Activated B cell treated with CpG ODN at 0.5 μM for 24 hours (primary cell): ENCODE measurements at regions of chr15 and their contacts with region 1.

Region 1: GRCh38 chr15:64067564-64068030 is 21.3 kb upstream of the DAPK2 start:
- DNase-seq: peak; percentile 54
- ATAC-seq: peak; percentile 91
- H3K4me3 Mint-ChIP-seq: no peak overlapping the region
- H3K27ac Mint-ChIP-seq: peak overlapping the region; percentile 20
- H3K4me1 Mint-ChIP-seq: peaks cover 27% of the 10 kb centered on the region
- H3K27me3 Mint-ChIP-seq: no peaks in the 10 kb centered on the region
- CTCF ChIP-seq: no peak

Region 2: GRCh38 chr15:63610200-63610841 is 457.3 kb before region 1 on chr15:
- CTCF ChIA-PET with region 1: interaction called, 5 read pairs
- POLR2A ChIA-PET with region 1: no interaction called
- intact Hi-C with region 1: loop called (anchors 2 kb)
- DNase-seq: no peak
- ATAC-seq: peak; percentile 91
- H3K4me3 Mint-ChIP-seq: peak overlapping the region; percentile 21
- H3K27ac Mint-ChIP-seq: peak overlapping the region; percentile 88
- H3K4me1 Mint-ChIP-seq: peaks cover 26% of the 10 kb centered on the region
- H3K27me3 Mint-ChIP-seq: no peaks in the 10 kb centered on the region
- CTCF ChIP-seq: no peak

Region 3: DNA sequence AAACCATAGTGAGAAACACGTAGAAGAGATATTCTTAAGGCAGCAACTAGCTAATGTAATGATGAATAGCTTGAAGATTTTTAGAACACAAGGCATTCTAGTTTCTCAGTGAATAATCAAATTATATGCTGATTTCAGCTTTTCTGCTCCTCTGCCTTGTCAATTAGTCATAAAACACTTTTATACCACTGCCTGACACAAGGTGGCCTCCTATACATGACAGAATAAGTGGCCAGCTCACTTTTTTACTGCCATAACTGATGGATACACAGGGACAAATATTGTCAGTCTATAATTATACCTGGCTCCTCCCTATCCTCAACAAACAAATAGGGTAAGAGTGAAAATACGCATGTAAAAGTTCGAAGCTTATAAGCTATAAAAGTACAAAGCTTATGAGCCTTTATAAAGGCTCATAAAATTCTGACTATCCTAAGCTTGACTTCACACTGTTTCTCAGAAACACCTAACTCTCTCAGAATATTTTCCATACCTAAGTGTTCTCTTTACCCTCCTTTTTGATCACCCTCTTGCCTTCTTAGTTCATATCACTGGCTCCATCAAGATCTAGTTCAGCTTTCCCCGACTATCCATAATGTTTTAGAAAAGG is 315.4 kb before region 1 on chr15:
- CTCF ChIA-PET with region 1: interaction called, 196 read pairs
- POLR2A ChIA-PET with region 1: interaction called, 11 read pairs
- intact Hi-C with region 1: loop called (anchors 1 kb)
- DNase-seq: no peak
- ATAC-seq: peak; percentile 83
- H3K4me3 Mint-ChIP-seq: no peak overlapping the region
- H3K27ac Mint-ChIP-seq: peak overlapping the region; percentile 59
- H3K4me1 Mint-ChIP-seq: peaks cover 3% of the 10 kb centered on the region
- H3K27me3 Mint-ChIP-seq: no peaks in the 10 kb centered on the region
- CTCF ChIP-seq: no peak

Region 4: GRCh38 chr15:63891079-63891767 is 176.4 kb before region 1 on chr15:
- CTCF ChIA-PET with region 1: interaction called, 11 read pairs
- POLR2A ChIA-PET with region 1: interaction called, 3 read pairs
- intact Hi-C with region 1: loop called (anchors 1 kb)
- DNase-seq: peak; percentile 74
- ATAC-seq: peak; percentile 71
- H3K4me3 Mint-ChIP-seq: no peak overlapping the region
- H3K27ac Mint-ChIP-seq: no peak overlapping the region
- H3K4me1 Mint-ChIP-seq: peaks cover 35% of the 10 kb centered on the region
- H3K27me3 Mint-ChIP-seq: no peaks in the 10 kb centered on the region
- CTCF ChIP-seq: peak; percentile 53

Region 5: GRCh38 chr15:63986751-63987341 is 80.8 kb before region 1 on chr15:
- CTCF ChIA-PET with region 1: interaction called, 5 read pairs
- POLR2A ChIA-PET with region 1: no interaction called
- intact Hi-C with region 1: loop called (anchors 1 kb)
- DNase-seq: no peak
- ATAC-seq: peak; percentile 82
- H3K4me3 Mint-ChIP-seq: peak overlapping the region; percentile 61
- H3K27ac Mint-ChIP-seq: peak overlapping the region; percentile 86
- H3K4me1 Mint-ChIP-seq: peaks cover 60% of the 10 kb centered on the region
- H3K27me3 Mint-ChIP-seq: no peaks in the 10 kb centered on the region
- CTCF ChIP-seq: no peak

Region 6: GRCh38 chr15:64046347-64047153 is 21.0 kb before region 1 on chr15 and contains the start of gene DAPK2:
- CTCF ChIA-PET with region 1: interaction called, 18 read pairs
- POLR2A ChIA-PET with region 1: interaction called, 4 read pairs
- intact Hi-C with region 1: loop called (anchors 1 kb)
- DNase-seq: peak; percentile 69
- ATAC-seq: peak; percentile 59
- H3K4me3 Mint-ChIP-seq: peak within 1 kb of the TSS; percentile 76
- H3K27ac Mint-ChIP-seq: peak within 1 kb of the TSS; percentile 7
- H3K4me1 Mint-ChIP-seq: peaks cover 68% of the 10 kb centered on the region
- H3K27me3 Mint-ChIP-seq: no peaks in the 10 kb centered on the region
- CTCF ChIP-seq: no peak
- total RNA-seq, gene DAPK2: 4.2 and 4.3 TPM in 2 replicates